ENCODE measurements at regions of chr5 and their contacts with region 1.

Region 1: GRCh38 chr5:76607353-76607871 is 15.8 kb downstream of the F2RL2 start:
- DNase-seq: peak; percentile 70
- H3K4me3 ChIP-seq: peak overlapping the region; percentile 23
- H3K27ac ChIP-seq: peak overlapping the region; percentile 75
- H3K4me1 ChIP-seq: peaks cover 39% of the 10 kb centered on the region
- CTCF ChIP-seq: no peak

Region 2: GRCh38 chr5:76617675-76618074 is 10.3 kb after region 1 on chr5:
- CTCF ChIA-PET with region 1: no interaction called
- POLR2A ChIA-PET with region 1: interaction called, 20 read pairs
- intact Hi-C with region 1: no loop called
- DNase-seq: no peak
- H3K4me3 ChIP-seq: no peak overlapping the region
- H3K27ac ChIP-seq: no peak overlapping the region
- H3K4me1 ChIP-seq: no peaks in the 10 kb centered on the region
- CTCF ChIP-seq: no peak

Region 3: DNA sequence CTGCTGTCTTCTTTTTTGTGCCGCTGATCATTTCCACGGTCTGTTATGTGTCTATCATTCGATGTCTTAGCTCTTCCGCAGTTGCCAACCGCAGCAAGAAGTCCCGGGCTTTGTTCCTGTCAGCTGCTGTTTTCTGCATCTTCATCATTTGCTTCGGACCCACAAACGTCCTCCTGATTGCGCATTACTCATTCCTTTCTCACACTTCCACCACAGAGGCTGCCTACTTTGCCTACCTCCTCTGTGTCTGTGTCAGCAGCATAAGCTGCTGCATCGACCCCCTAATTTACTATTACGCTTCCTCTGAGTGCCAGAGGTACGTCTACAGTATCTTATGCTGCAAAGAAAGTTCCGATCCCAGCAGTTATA is 125.6 kb after region 1 on chr5:
- CTCF ChIA-PET with region 1: no interaction called
- POLR2A ChIA-PET with region 1: no interaction called
- intact Hi-C with region 1: no loop called
- DNase-seq: no peak
- H3K4me3 ChIP-seq: no peak overlapping the region
- H3K27ac ChIP-seq: no peak overlapping the region
- H3K4me1 ChIP-seq: no peaks in the 10 kb centered on the region
- CTCF ChIP-seq: no peak